CD8-positive, alpha-beta T cell (primary cell): ENCODE measurements at regions of chr16 and their contacts with region 1.

Region 1: GRCh38 chr16:29805378-29806098 is 791 bp upstream of the MAZ start:
- DNase-seq: peak; percentile 95 to 99 (median 98)
- ATAC-seq: peak; percentile 60
- H3K4me3 ChIP-seq: peak overlapping the region; percentile 70 to 82
- H3K4me3 Mint-ChIP-seq: peak overlapping the region; percentile 99
- H3K27ac ChIP-seq: peak overlapping the region; percentile 86 to 87
- H3K27ac Mint-ChIP-seq: peak overlapping the region; percentile 100
- H3K4me1 ChIP-seq: peaks cover 42% of the 10 kb centered on the region
- H3K4me1 Mint-ChIP-seq: peaks cover 39% of the 10 kb centered on the region
- H3K27me3 ChIP-seq: no peaks in the 10 kb centered on the region
- H3K27me3 Mint-ChIP-seq: no peaks in the 10 kb centered on the region
- CTCF ChIP-seq: no peak

Region 2: GRCh38 chr16:29790183-29790952 is 15.2 kb before region 1 on chr16 and contains the start of gene KIF22:
- CTCF ChIA-PET with region 1: interaction called, 14 read pairs
- POLR2A ChIA-PET with region 1: interaction called, 77 read pairs
- intact Hi-C with region 1: loop called (anchors 1 kb)
- DNase-seq: peak; percentile 99 to 100 (median 100)
- ATAC-seq: peak; percentile 95
- H3K4me3 ChIP-seq: peak within 1 kb of the TSS; percentile 81 to 94
- H3K4me3 Mint-ChIP-seq: peak within 1 kb of the TSS; percentile 99
- H3K27ac ChIP-seq: peak within 1 kb of the TSS; percentile 78 to 80
- H3K27ac Mint-ChIP-seq: peak within 1 kb of the TSS; percentile 95
- H3K4me1 ChIP-seq: peaks cover 30% of the 10 kb centered on the region
- H3K4me1 Mint-ChIP-seq: peaks cover 41% of the 10 kb centered on the region
- H3K27me3 ChIP-seq: no peaks in the 10 kb centered on the region
- H3K27me3 Mint-ChIP-seq: no peaks in the 10 kb centered on the region
- CTCF ChIP-seq: peak; percentile 67
- total RNA-seq, gene KIF22: 93.5 to 105 TPM

Region 3: GRCh38 chr16:29825145-29826044 is 19.9 kb after region 1 on chr16:
- CTCF ChIA-PET with region 1: interaction called, 8 read pairs
- POLR2A ChIA-PET with region 1: interaction called, 89 read pairs
- intact Hi-C with region 1: no loop called
- DNase-seq: peak in 4 of 9 experiments; percentile 32 to 63 (median 50)
- ATAC-seq: peak; percentile 25
- H3K4me3 ChIP-seq: no peak overlapping the region
- H3K4me3 Mint-ChIP-seq: peak overlapping the region; percentile 72
- H3K27ac ChIP-seq: peak overlapping the region; percentile 26 to 37
- H3K27ac Mint-ChIP-seq: peak overlapping the region; percentile 92
- H3K4me1 ChIP-seq: peaks cover 91% of the 10 kb centered on the region
- H3K4me1 Mint-ChIP-seq: peaks cover 75% of the 10 kb centered on the region
- H3K27me3 ChIP-seq: no peaks in the 10 kb centered on the region
- H3K27me3 Mint-ChIP-seq: no peaks in the 10 kb centered on the region
- CTCF ChIP-seq: no peak

Region 4: GRCh38 chr16:29995911-29996772 is 190.6 kb after region 1 on chr16 and contains the start of gene INO80E:
- CTCF ChIA-PET with region 1: no interaction called
- POLR2A ChIA-PET with region 1: no interaction called
- intact Hi-C with region 1: loop called (anchors 1 kb)
- DNase-seq: peak; percentile 98 to 100 (median 99)
- ATAC-seq: peak; percentile 96
- H3K4me3 ChIP-seq: peak within 1 kb of the TSS; percentile 93 to 100
- H3K4me3 Mint-ChIP-seq: peak within 1 kb of the TSS; percentile 94
- H3K27ac ChIP-seq: peak within 1 kb of the TSS; percentile 99
- H3K27ac Mint-ChIP-seq: peak within 1 kb of the TSS; percentile 97
- H3K4me1 ChIP-seq: peaks cover 14% of the 10 kb centered on the region
- H3K4me1 Mint-ChIP-seq: peaks cover 39% of the 10 kb centered on the region
- H3K27me3 ChIP-seq: no peaks in the 10 kb centered on the region
- H3K27me3 Mint-ChIP-seq: no peaks in the 10 kb centered on the region
- CTCF ChIP-seq: no peak
- total RNA-seq, gene INO80E: 49.8 to 59.4 TPM

Region 5: DNA sequence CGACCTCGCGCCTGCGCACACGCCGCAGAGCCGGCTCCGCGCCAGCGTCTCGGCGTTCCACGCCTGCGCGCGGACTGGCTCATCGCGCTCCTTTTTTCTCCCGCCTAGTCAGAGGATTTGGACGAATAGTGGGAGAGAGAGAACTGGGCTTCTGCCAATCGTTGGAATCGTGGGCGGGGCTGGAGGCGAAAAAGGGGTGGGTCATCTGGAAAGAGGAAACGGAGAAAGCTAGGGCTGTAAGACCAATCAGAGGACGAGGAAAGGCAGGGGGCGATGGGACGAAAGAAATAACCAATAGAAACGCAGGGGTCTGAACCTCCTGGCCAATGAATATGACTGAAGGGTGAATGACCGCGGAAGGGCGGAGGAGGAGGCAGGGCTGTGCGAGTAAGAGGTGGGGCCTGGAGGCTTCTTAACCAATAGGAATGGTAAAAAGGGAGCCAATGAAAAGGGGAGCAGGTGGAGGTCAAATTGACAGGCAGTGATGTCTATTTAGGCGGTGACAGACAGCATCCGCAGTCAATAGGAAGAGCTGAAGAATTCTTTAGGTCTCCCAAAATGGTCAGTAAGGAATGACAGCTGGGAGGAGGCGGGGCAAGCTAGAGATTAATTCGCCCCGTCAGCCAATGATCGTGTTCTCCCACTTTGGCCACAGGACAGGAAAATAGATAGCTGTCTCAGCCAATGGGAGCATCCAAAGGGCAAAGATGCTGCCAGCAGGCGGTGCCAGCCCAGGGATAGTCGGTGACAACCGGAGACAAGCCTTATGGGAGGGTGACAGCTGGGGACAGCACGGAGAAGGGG is 565.1 kb after region 1 on chr16 and contains the start of gene TBC1D10B:
- CTCF ChIA-PET with region 1: no interaction called
- POLR2A ChIA-PET with region 1: no interaction called
- intact Hi-C with region 1: loop called (anchors 1 to 10 kb)
- DNase-seq: peak; percentile 98 to 100 (median 99)
- ATAC-seq: peak; percentile 84
- H3K4me3 ChIP-seq: peak within 1 kb of the TSS; percentile 79 to 83
- H3K4me3 Mint-ChIP-seq: peak within 1 kb of the TSS; percentile 89
- H3K27ac ChIP-seq: peak within 1 kb of the TSS; percentile 36 to 84
- H3K27ac Mint-ChIP-seq: peak within 1 kb of the TSS; percentile 87
- H3K4me1 ChIP-seq: peaks cover 42% of the 10 kb centered on the region
- H3K4me1 Mint-ChIP-seq: peaks cover 54% of the 10 kb centered on the region
- H3K27me3 ChIP-seq: no peaks in the 10 kb centered on the region
- H3K27me3 Mint-ChIP-seq: no peaks in the 10 kb centered on the region
- CTCF ChIP-seq: no peak
- total RNA-seq, gene TBC1D10B: 12.3 to 13.8 TPM